ENCODE measurements at regions of chr7 and their contacts with region 1.

Region 1: DNA sequence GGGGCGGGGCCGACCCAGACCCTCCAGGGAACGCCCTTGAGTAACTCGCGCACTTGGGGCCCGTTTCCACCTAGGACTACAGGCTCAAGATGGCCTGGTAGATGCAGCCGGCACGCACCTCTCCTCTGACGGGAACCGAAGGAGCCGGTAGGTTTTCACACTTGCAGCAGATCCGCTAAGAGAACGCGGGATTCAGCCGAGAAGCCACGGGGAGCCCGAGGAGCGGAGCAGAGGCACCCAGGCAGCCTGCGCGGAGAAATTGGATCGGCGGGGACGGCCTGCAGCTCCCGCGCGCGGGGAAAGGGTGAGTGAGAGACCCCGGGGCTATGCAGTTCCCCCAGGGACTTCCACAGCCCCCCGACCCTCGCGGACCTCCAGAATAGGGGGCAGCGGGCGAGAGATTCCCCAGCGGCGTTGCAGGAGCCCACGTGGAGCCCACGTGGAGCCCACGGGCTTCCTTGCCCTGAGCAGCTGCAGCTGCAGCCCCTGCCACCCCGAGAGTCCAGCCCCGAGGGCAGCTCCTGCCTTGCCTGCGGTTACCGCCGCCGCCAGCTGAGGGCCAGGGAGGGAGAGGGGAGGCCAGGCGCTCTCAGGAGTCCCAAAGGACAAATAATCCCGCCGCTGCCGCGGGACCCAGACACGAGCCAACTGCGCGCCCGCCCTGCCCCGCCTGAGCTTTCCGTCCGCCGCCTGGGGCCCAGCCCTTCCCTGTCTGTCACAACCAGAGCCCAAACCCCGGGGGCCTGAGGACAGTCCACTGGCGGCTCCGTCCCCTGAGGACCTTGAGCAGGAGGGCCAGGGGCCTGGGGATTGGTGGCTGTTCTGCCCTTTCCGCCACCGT is 13.1 kb downstream of the IFT22 start:
- DNase-seq: peak; percentile 90
- ATAC-seq: peak; percentile 87
- H3K4me3 Mint-ChIP-seq: peak overlapping the region; percentile 100
- H3K27ac Mint-ChIP-seq: peak overlapping the region; percentile 98
- H3K4me1 Mint-ChIP-seq: peaks cover 42% of the 10 kb centered on the region
- H3K27me3 Mint-ChIP-seq: no peaks in the 10 kb centered on the region
- CTCF ChIP-seq: no peak

Region 2: DNA sequence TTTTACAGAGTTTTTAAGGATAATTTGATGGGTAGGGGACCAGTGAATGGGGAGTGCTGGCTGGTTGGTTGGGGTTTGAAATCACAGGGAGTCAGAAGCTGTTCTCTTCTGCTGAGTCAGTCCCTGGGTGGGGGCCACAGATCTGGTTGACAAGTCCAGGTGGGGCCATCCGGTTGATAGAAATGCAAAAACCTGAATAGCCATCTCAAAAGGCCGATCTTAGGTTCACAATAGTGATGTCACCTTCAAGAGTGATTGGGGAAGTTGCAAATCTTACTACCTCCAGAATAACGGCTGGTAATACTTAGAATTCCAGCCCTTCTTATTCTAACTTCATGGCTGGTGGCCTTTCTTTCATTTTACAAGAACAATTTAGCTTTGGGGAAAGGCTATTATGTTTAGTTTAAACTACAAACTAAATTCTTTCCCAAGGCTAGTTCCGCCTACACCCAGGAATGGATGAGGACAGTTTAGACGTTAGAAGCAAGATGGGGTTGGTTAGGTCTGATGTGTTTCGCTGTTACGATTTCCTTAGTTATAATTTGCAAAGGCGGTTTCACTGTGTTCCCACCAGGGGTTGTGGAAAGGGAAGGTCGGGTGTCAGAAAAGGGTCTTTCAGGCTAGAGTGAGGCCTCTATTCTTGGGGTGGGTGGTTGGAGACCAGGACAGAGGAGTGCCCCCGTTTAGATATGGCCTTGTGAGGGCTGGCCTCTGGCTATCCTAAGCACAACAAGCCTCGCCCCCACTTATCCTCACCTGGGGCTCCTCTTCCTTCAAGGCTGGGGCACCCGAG is 14.2 kb before region 1 on chr7:
- CTCF ChIA-PET with region 1: interaction called, 9 read pairs
- POLR2A ChIA-PET with region 1: interaction called, 19 read pairs
- DNase-seq: peak; percentile 85
- ATAC-seq: peak; percentile 64
- H3K4me3 Mint-ChIP-seq: peak overlapping the region; percentile 36
- H3K27ac Mint-ChIP-seq: peak overlapping the region; percentile 99
- H3K4me1 Mint-ChIP-seq: peaks cover 65% of the 10 kb centered on the region
- H3K27me3 Mint-ChIP-seq: no peaks in the 10 kb centered on the region
- CTCF ChIP-seq: no peak